ENCODE measurements at regions of chrX and their contacts with region 1.

Region 1: GRCh38 chrX:20530406-20530921 is 263.8 kb upstream of the RPS6KA3 start:
- DNase-seq: no peak
- H3K4me3 ChIP-seq: peak overlapping the region; percentile 27
- CTCF ChIP-seq: peak; percentile 48

Region 2: DNA sequence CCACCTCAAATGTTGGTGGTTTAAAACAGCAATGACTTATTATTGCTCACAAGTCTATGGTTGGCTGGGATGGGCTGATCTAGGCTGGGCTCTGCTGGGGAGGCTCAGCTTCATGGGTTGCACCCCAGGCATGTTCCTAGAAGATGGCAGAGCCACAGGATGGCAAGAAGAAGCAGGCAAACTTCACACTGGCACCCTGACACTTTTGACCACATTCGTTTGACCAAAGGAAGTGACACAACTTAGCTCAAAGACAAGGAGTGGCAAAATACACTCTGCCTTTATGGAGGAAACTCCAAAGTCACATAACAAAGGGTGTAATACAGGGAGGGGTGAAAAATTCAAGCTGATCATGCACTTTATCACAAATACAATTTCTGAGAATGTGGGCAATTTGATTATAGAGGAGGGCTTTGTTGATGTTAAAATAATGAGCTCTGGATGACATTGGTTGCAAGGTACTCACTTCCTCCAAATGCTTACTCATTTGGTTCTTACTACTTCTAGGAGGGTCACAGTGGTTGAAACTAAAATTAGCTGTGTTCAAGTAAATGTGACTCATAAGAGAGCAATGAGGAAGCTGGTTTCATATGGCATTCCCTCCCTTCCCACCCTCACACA is 14.5 kb before region 1 on chrX:
- CTCF ChIA-PET with region 1: interaction called, 11 read pairs
- POLR2A ChIA-PET with region 1: no interaction called
- DNase-seq: peak; percentile 51
- H3K4me3 ChIP-seq: no peak overlapping the region
- CTCF ChIP-seq: no peak

Region 3: DNA sequence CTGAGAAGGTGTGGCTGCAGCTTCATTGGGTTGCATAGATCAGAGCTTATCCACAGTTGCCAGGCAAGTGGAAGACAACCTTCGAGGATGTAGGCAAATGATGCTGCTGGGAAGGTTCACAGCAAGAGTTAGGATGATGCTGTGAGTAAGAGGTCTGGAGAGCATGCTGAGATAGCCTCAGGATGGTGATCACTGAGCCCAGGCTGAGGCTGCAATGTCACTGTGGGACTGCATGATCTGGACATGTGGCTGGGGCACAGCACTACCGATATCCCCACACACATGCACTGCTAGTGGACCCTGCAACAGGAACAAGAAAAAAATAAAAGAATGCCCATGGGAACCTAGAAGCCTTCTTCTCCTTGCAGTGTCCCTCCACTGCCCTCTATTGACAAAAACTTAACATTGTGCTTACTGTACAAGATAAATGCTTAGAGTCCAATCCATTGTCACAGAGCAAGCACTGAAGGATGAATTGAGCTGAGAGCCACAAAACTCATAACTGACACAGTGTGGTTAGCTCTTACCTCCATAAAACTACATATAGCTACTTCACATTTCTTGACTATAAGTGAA is 949.3 kb after region 1 on chrX:
- CTCF ChIA-PET with region 1: interaction called, 62 read pairs
- POLR2A ChIA-PET with region 1: no interaction called
- DNase-seq: peak; percentile 5
- H3K4me3 ChIP-seq: no peak overlapping the region
- CTCF ChIP-seq: peak; percentile 51

Region 4: GRCh38 chrX:21725496-21725895 is 1195.0 kb after region 1 on chrX:
- CTCF ChIA-PET with region 1: interaction called, 34 read pairs
- POLR2A ChIA-PET with region 1: no interaction called
- DNase-seq: no peak
- H3K4me3 ChIP-seq: no peak overlapping the region
- CTCF ChIP-seq: peak; percentile 47

Region 5: DNA sequence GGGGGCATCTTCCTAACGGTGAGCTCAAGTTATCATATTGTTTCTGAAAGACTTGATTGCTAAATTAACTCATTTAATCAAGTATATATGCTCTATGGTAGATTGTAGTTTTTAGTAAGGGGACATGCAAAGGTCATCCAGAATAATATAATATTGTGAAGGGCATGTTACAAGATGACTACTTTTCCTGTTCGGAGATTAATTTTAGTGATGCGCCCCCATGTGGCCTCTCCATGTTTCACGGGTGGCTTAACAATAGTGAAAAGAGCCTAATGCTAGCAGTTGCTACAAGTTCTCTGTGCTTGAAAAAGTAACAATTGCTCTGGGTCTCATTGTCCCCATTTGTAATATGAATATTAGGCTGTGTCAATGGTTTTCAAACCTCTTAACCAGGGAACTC is 1215.3 kb after region 1 on chrX:
- CTCF ChIA-PET with region 1: interaction called, 12 read pairs
- POLR2A ChIA-PET with region 1: no interaction called
- DNase-seq: no peak
- H3K4me3 ChIP-seq: no peak overlapping the region
- CTCF ChIP-seq: peak; percentile 28